ENCODE measurements at regions of chr18 and their contacts with region 1.

Region 1: DNA sequence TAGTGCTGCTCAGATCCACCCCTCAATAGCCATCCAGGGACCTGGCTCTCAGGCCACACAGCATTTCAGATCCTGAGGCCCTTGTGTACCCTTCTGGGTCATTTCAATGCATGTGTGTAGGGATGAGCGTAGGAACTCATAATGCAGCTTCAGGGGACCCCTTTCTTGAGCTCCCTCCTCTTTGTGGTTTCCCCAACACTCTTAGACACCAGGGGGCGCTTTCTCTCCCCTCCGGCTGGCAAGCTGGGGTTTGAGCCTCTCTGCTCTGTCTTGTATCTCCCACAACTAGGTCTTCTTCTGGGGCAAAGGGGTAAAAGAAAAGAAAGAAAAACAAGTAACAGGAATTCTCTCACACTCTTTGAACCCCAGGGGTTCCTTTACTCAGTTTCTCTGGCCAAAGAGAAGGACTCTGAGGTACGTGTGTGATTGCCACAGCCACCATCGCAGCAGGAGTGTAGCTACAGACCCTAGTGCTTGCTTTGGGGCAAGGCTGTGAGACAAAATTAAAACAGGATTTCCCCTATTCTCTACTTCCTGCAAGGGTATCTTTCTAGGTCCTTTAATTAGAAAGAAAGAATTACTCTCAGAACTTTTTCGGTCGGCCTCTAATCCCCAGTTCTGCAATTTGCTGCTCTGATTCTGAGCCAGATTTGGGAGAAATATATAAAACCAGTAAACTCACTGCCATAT is 38.0 kb downstream of the CABYR start:
- DNase-seq: peak; percentile 68
- H3K4me3 ChIP-seq: peak overlapping the region; percentile 20
- H3K27ac ChIP-seq: no peak overlapping the region
- H3K4me1 ChIP-seq: peaks cover 9% of the 10 kb centered on the region
- CTCF ChIP-seq: peak; percentile 89

Region 2: GRCh38 chr18:23912356-23912755 is 264.5 kb before region 1 on chr18:
- CTCF ChIA-PET with region 1: no interaction called
- POLR2A ChIA-PET with region 1: no interaction called
- intact Hi-C with region 1: no loop called
- DNase-seq: no peak
- H3K4me3 ChIP-seq: no peak overlapping the region
- H3K27ac ChIP-seq: no peak overlapping the region
- H3K4me1 ChIP-seq: peaks cover 16% of the 10 kb centered on the region
- CTCF ChIP-seq: no peak

Region 3: DNA sequence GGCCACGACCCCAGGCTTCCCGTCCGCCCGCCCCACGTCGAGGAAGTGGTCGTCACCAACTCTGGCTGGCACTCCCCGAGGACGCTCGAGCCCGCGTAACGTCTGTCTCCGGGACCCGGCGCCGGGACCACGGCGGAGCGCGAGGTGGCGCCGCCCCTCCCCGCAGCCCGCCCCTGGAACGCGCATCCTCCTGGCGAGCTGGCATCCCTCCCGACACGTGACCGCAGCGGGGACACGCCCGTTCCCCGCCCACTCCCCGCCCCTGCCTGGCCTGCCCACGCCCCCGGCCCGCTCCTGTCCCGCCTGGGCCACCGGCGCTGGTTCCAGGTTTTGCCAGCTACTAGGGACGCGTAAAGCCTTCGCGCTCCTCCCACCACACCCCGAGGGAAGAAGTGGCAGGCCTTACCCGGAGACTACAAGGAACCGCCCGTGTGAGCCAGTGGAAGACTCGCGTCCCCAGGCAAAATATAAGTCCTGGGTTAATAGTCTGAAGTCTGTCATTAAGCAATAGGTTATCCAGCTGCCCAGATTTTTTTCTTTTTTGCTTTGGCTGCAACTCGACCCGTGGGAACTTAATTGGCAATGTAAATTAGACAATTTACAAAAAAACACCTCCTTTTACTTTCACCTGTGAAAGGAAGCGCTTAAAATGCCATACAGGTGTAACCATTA is 221.0 kb after region 1 on chr18 and contains the start of gene OSBPL1A:
- CTCF ChIA-PET with region 1: no interaction called
- POLR2A ChIA-PET with region 1: no interaction called
- intact Hi-C with region 1: loop called (anchors 10 kb)
- DNase-seq: peak; percentile 72
- H3K4me3 ChIP-seq: peak within 1 kb of the TSS; percentile 66
- H3K27ac ChIP-seq: no peak within 1 kb of the TSS
- H3K4me1 ChIP-seq: peaks cover 7% of the 10 kb centered on the region
- CTCF ChIP-seq: no peak
- total RNA-seq, gene OSBPL1A: 0.06 and 1.4 TPM in 2 replicates